ENCODE measurements at regions of chr6 and their contacts with region 1.

Region 1: DNA sequence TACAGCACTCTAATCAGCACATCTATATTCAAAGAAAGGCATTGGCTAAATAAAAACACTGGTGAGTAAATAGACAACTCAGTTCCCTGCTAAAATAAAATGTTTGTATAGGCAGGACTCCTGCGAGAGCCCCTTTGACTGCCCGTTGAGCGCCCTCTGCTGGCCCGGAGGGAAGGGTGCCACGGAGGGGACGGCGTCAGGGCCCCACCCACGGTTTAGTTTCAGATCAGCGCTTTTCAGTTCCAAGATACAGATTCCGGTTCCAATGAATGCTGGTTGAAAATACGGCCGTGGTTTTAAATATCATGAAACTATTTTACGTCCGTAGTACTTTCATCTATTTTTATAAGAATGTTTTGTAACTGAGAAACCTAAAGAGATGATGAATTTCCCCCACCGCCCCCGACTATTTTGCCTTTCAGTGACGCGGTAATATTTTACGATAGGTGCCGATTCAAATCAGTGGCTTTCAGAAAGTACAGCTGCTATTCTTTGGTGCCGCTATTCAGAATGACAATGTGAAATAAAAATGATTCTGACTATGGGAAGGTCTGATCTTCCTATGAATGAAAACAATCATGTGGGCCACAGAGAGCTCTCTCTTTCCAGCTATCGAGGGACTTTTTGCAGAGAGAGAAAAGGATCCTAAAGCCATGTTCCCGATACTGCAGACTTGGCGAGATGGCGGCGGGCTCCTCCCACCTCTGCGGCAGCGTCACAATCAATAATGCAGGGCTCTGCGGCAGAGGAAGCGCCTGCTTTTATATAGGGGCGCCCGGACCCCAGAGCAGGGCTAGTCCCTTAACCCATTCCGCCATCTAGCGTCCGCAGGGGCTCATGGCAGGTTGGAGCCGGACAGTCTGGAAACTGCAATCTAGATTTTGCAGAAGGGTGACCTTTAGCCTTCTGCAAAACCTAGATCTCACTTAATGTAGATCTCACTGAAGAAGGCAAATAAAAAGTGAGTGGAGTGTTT is 10.6 kb upstream of the CCN6 start:
- DNase-seq: peak; percentile 78
- ATAC-seq: peak; percentile 94
- H3K4me3 Mint-ChIP-seq: peak overlapping the region; percentile 91
- H3K27ac Mint-ChIP-seq: peak overlapping the region; percentile 96
- H3K4me1 Mint-ChIP-seq: peaks cover 9% of the 10 kb centered on the region
- H3K27me3 Mint-ChIP-seq: no peaks in the 10 kb centered on the region
- CTCF ChIP-seq: peak; percentile 62

Region 2: DNA sequence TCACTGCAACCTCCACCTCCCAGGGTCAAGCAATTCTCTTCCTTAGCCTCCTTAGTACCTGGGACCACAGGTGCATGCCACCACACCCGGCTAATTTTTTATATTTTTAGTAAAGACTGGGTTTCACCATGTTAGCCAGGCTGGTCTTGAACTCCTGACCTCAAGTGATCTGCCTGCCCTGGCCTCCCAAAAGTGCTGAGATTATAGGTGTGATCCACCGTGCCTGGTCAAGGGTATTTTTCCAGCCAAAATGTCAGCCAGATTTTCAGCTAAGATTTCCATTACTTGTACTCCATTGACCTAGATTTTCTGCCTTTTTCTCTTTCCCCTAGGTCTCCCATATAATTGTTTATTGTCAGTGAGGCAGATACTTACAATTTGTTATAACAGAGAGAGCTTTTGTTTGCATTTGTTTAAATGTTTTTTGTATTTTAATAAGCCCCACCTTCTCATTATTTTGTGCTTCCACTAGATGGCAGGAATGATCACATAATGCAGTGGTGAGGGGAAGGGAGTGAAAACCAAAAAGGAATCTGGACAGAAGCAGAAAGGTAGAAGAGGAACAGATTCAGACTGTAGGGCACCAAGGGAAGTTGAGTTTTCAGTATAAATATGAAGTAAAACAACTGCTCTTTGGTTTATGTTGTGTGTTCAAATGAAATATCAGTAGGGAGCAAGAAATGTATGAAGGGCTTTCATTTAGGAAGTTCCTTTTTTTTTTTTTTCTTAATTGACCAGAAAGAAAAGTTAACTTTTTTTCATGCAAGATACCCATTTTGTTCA is 1031.8 kb before region 1 on chr6:
- CTCF ChIA-PET with region 1: interaction called, 6 read pairs
- POLR2A ChIA-PET with region 1: no interaction called
- intact Hi-C with region 1: loop called (anchors 1 kb)
- DNase-seq: no peak
- ATAC-seq: peak; percentile 50
- H3K4me3 Mint-ChIP-seq: no peak overlapping the region
- H3K27ac Mint-ChIP-seq: no peak overlapping the region
- H3K4me1 Mint-ChIP-seq: peaks cover 4% of the 10 kb centered on the region
- H3K27me3 Mint-ChIP-seq: no peaks in the 10 kb centered on the region
- CTCF ChIP-seq: no peak

Region 3: GRCh38 chr6:111361648-111362047 is 681.7 kb before region 1 on chr6:
- CTCF ChIA-PET with region 1: no interaction called
- POLR2A ChIA-PET with region 1: no interaction called
- intact Hi-C with region 1: loop called (anchors 10 kb)
- DNase-seq: no peak
- ATAC-seq: no peak
- H3K4me3 Mint-ChIP-seq: no peak overlapping the region
- H3K27ac Mint-ChIP-seq: no peak overlapping the region
- H3K4me1 Mint-ChIP-seq: no peaks in the 10 kb centered on the region
- H3K27me3 Mint-ChIP-seq: no peaks in the 10 kb centered on the region
- CTCF ChIP-seq: no peak

Region 4: DNA sequence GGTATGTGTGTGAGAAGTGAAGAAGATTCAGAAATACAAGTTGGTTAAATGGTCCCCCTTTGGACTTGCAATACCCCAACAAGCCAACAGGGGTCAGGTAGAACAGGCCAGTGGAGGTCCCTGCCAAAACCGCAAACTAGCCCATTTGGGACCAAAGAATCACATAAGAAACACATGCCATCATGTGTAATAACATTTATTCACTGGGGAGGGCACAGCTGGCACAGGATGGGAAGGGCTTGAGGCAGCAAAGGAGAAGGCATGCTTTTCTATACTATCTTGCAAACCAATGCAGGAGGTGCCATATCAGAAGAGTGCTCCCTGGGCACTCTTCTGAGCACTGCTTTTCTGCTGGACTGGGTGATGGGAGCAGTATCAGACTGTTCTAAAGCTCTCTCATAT is 321.6 kb before region 1 on chr6:
- CTCF ChIA-PET with region 1: interaction called, 9 read pairs
- POLR2A ChIA-PET with region 1: no interaction called
- intact Hi-C with region 1: loop called (anchors 1 kb)
- DNase-seq: no peak
- ATAC-seq: peak; percentile 43
- H3K4me3 Mint-ChIP-seq: no peak overlapping the region
- H3K27ac Mint-ChIP-seq: peak overlapping the region; percentile 7
- H3K4me1 Mint-ChIP-seq: peaks cover 45% of the 10 kb centered on the region
- H3K27me3 Mint-ChIP-seq: no peaks in the 10 kb centered on the region
- CTCF ChIP-seq: no peak

Region 5: DNA sequence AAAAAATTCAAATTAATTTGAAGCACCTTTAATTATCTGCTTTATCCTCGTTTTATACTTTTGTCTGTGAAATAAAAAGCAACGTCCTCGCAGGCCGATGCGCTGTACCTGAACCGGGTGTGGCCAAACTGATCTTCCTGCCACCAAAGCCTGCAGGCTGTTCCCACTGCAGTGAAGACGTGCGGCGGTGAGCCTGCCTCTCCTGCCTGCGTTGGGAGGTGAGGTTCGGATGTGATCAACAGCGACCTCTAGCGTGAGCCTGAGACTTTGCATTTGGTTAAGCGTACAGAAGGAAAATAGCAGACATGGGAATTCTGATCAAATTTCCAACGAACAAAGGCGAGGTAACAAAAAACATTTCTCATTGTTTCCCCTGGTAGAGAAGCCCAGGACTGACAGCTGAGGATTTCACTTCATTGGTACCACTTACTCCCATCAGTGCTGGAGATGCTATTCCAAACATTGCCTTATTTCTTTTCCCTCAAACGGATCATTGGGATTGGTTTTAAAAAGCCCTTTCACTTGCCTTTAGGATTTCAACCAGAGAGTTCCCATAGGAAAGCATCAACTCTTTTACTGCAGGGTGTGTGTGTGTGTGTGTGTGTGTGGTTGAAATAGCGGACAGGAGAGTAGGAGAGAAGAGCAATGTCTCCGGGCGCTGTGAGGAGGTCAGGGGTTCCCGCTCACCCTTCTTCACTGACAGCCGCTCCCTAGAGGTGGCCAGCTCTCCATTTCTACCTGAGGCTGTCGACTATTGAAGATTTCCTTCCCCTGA is 46.1 kb before region 1 on chr6:
- CTCF ChIA-PET with region 1: interaction called, 5 read pairs
- POLR2A ChIA-PET with region 1: no interaction called
- intact Hi-C with region 1: loop called (anchors 1 kb)
- DNase-seq: peak; percentile 49
- ATAC-seq: peak; percentile 90
- H3K4me3 Mint-ChIP-seq: peak overlapping the region; percentile 42
- H3K27ac Mint-ChIP-seq: no peak overlapping the region
- H3K4me1 Mint-ChIP-seq: peaks cover 6% of the 10 kb centered on the region
- H3K27me3 Mint-ChIP-seq: peaks cover 2% of the 10 kb centered on the region
- CTCF ChIP-seq: no peak

Region 6: DNA sequence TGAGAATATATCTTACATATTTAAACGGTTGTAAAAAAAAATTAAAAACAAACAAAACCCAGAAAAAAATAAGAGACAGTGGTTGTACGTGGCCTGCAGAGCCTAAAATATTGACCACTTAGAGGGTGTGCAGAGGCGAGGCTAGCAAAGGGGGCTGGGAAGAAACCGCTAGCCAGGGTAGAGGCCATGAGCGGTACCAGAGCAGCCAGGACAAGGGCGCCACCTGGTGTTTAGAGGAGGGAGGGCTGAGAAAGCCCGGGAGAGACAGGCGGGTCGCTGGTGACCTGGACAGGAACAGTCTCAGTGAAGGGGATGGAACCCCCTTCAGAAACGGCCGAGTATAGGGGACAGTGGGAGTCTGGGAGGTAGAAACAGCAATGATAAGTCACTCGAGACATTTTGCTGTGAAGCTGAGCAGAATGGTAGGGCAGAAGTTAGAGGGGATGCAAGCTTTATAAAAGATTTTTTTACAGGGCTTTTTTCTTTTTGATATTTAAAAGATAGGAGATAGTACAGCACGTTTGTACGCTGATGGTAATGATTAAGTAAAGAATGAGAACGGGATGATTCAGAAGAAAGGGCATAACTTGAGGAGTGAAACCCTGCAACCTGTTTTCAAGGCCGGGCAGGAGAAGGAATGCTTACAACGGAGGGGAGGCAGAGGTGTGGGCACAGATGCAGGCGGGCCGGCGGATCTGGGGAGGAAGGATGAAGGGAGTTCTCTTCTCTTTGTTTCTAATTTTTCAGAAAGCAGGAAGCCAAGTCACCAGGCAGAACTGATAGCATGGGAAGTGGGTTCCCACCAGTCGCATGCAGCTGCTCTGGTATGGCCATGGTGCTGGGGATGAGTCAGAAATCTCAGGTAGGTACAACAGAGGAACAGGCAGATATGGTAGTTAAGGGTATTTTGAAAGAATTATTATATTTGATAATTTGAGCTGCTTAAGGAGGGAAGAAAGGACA is 120.3 kb after region 1 on chr6:
- CTCF ChIA-PET with region 1: no interaction called
- POLR2A ChIA-PET with region 1: no interaction called
- intact Hi-C with region 1: loop called (anchors 1 kb)
- DNase-seq: peak; percentile 58
- ATAC-seq: peak; percentile 98
- H3K4me3 Mint-ChIP-seq: peak overlapping the region; percentile 32
- H3K27ac Mint-ChIP-seq: no peak overlapping the region
- H3K4me1 Mint-ChIP-seq: peaks cover 8% of the 10 kb centered on the region
- H3K27me3 Mint-ChIP-seq: peaks cover 40% of the 10 kb centered on the region
- CTCF ChIP-seq: no peak